Dorsolateral prefrontal cortex (tissue), 120 donors: ENCODE measurements at regions of chr17 and their contacts with region 1.

Region 1: DNA sequence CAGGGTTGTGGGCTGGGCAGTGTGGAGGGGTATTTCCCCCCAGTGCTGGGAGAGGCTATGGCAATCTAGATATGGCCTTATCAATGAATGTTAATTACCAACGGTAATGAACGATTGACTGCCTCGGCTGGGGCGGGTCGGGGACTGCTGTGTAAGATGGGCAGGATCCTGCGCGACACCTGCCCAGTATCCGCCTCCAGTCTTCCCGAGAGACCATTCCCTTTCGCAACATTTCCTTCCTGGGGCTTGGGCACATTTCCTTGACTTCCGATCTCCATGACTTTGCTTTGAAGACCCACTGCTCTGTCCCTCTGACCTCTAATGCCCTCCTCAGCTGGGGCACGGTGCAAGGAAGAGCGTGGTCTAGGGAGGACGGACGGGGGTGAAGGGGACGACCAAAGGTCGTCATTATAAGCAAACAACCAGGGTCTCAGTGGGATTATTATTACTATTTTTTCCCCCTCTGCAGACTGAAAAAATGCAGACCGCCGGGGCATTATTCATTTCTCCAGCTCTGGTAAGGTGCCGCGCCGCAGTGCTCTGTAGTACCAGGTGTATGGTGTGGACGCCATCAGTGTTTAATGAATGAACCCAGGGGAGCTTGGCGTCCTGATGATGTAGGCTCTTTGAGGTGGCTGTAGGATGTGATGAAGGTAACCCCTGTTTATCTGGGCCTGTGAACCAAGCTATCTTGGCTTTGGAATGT is 506 bp downstream of the ATP5MC1 start:
- DNase-seq: no peak
- H3K4me3 ChIP-seq: peak overlapping the region; percentile 55 to 100 (median 89)
- H3K27ac ChIP-seq: peak overlapping the region in 49 of 59 donors; percentile 8 to 88 (median 72)
- H3K27me3 ChIP-seq: no peaks in the 10 kb centered on the region
- CTCF ChIP-seq: no peak

Region 2: DNA sequence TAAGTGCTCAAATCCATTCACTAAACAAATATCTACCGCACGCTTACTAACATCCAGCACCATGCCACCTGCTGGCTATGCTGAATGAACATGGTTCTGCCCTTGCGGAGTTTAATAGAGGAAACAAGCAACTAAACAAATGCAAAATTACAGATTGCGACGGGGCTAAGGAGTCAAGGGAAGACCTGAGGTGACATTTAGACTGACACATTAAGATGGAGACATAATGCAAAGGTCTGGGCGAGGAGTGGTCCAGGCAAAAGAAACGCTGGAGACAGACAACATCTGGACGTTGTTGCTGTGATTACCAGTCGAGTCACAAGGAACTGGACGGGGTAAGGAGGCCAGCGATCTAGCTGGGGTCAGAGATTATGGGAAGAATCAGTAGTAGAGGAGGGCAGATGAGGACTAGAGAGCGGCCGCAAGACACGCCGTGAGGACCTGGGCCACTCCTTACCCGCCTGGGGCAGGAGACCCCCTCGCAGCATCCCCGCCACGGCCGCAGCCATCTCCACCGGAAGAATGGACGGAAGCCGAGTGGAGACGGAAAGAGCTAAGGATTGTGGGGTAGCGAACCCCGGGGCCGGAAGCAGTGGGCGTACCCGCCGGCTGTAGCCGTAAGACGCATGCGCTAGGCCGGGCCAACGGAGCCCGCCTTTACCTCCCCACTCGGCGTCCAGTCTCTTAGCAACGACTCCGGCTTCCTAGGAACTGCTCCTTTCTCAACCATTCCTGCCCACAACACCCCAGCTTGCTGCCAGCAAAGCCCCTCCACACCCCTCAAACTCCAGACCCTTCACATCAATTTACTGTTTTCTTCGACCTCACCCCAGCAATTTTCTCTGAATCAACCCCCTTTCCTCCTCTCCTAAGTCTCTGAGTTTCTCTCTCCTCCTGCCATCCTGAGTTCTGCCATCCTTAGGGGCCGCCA is 1061.8 kb before region 1 on chr17 and contains the starts of genes LRRC46 and MRPL10:
- intact Hi-C with region 1: loop called in 1 of 2 experiments (anchors 10 kb)
- DNase-seq: peak; percentile 83 to 93 (median 86)
- H3K4me3 ChIP-seq: peak within 1 kb of the TSS; percentile 62 to 99 (median 87)
- H3K27ac ChIP-seq: peak within 1 kb of the TSS in 54 of 59 donors; percentile 8 to 91 (median 72)
- H3K27me3 ChIP-seq: no peaks in the 10 kb centered on the region
- CTCF ChIP-seq: peak in 48 of 56 donors; percentile 6 to 67 (median 32)
- total RNA-seq, gene LRRC46: 0.26 to 1.8 (median 0.75) TPM in 76 of 120 experiments, not detected in the others
- total RNA-seq, gene MRPL10: 26.3 to 47.8 (median 35.6) TPM

Region 3: GRCh38 chr17:48830840-48831548 is 62.1 kb before region 1 on chr17 and contains the start of gene CALCOCO2:
- intact Hi-C with region 1: loop called in 1 of 2 experiments (anchors 5 kb)
- DNase-seq: peak; percentile 92 to 97 (median 95)
- H3K4me3 ChIP-seq: peak within 1 kb of the TSS; percentile 73 to 100 (median 92)
- H3K27ac ChIP-seq: peak within 1 kb of the TSS; percentile 10 to 98 (median 88)
- H3K27me3 ChIP-seq: no peaks in the 10 kb centered on the region
- CTCF ChIP-seq: peak in 46 of 56 donors; percentile 8 to 64 (median 40)
- total RNA-seq, gene CALCOCO2: 103 to 225 (median 157) TPM

Region 4: GRCh38 chr17:48908047-48908843 is 15.2 kb after region 1 on chr17 and contains the start of gene UBE2Z:
- intact Hi-C with region 1: loop called (anchors 1 kb)
- DNase-seq: peak; percentile 87 to 96 (median 93)
- H3K4me3 ChIP-seq: peak within 1 kb of the TSS; percentile 57 to 98 (median 81)
- H3K27ac ChIP-seq: peak within 1 kb of the TSS; percentile 5 to 98 (median 91)
- H3K27me3 ChIP-seq: no peaks in the 10 kb centered on the region
- CTCF ChIP-seq: peak in 51 of 56 donors; percentile 10 to 68 (median 47)
- total RNA-seq, gene UBE2Z: 65.4 to 132 (median 91.1) TPM

Region 5: DNA sequence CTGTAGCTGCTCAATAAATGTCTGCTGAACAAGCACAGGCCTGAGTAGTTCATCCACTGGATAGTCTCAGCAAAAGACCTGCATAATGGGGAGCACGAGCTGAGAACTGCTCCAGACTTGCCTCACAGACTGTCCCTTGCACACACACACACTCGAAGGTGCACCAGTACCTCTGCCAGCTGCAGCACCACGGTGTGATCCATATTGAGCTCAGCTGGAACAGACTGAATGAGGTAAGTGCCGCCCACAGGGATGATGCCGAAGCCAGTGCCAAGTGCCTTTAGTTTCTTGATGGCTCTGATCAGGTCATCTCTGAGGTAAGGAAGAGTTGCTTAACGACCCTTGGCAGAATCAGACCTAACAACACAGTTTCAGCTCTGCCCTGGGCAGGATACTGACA is 39.9 kb after region 1 on chr17:
- intact Hi-C with region 1: no loop called
- DNase-seq: no peak
- H3K4me3 ChIP-seq: no peak overlapping the region
- H3K27ac ChIP-seq: no peak overlapping the region
- H3K27me3 ChIP-seq: no peaks in the 10 kb centered on the region
- CTCF ChIP-seq: no peak

Region 6: GRCh38 chr17:48944519-48945260 is 51.6 kb after region 1 on chr17 and contains the start of gene SNF8:
- intact Hi-C with region 1: loop called in 1 of 2 experiments (anchors 1 kb)
- DNase-seq: peak; percentile 86 to 96 (median 91)
- H3K4me3 ChIP-seq: peak within 1 kb of the TSS; percentile 58 to 100 (median 88)
- H3K27ac ChIP-seq: peak within 1 kb of the TSS in 58 of 59 donors; percentile 47 to 96 (median 86)
- H3K27me3 ChIP-seq: no peaks in the 10 kb centered on the region
- CTCF ChIP-seq: peak in 30 of 56 donors; percentile 7 to 55 (median 24)
- total RNA-seq, gene SNF8: 50.1 to 104 (median 70.5) TPM